Stomach (tissue), 19 donors: ENCODE measurements at regions of chr11 and their contacts with region 1.

Region 1: GRCh38 chr11:116276051-116277044 is 496.4 kb downstream of the BUD13 start:
- DNase-seq: peak; percentile 82 to 87
- H3K4me3 ChIP-seq: peak overlapping the region in 3 of 4 donors; percentile 22 to 29 (median 24)
- H3K27ac ChIP-seq: no peak overlapping the region
- H3K4me1 ChIP-seq: peaks cover 6 to 8% (median 7%) of the 10 kb centered on the region in 4 donors
- H3K27me3 ChIP-seq: peaks cover 0 to 35% (median 11%) of the 10 kb centered on the region in 3 donors
- CTCF ChIP-seq: peak in 5 of 7 experiments; percentile 80 to 98 (median 92)
- EP300 ChIP-seq: no peak
- POLR2A ChIP-seq: no peak

Region 2: DNA sequence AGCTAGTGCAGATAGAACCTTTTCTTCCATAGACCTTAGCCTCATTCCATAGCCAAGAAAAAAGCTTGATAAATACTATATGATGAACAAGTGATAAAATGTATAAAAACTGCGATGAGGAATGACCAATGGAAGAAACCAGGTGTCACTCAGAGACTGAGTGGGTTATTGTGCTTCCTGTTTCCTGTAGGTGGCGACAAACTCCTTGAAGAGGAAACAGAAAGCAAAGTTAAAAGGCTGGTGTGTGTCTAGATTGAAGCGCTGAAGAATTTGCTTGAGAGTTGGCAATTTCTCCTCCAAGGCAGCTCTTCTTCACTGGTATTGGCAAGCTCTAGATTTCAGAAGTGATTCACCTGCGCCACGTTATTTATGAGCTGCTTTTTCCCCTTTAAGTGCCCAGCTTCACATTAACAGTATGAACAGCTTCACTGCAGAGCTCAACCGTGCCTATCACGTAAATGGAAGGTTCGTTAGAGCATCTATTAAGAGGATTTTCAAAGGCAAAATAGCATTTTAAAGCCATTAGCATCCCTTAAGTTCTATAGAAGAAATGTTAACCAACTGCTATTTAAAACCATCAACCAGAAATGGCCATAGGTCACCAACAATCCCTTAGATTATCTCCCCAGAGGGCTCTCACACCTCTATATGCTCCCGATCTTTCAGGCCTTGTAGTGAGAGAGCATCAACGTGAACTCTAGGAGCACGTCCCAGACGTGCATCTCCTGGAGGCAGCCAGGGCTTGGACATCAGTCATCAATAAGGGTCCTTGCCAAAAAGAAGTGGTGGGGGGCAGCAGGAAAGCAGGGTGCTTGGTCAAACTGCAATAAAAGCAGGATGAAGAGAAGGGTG is 951.5 kb before region 1 on chr11:
- intact Hi-C with region 1: loop called (anchors 10 kb)
- DNase-seq: peak; percentile 27 to 84
- H3K4me3 ChIP-seq: no peak overlapping the region
- H3K27ac ChIP-seq: no peak overlapping the region
- H3K4me1 ChIP-seq: peaks cover 0 to 7% (median 0%) of the 10 kb centered on the region in 4 donors
- H3K27me3 ChIP-seq: no peaks in the 10 kb centered on the region
- CTCF ChIP-seq: peak in 5 of 7 experiments; percentile 59 to 81 (median 70)
- EP300 ChIP-seq: no peak
- POLR2A ChIP-seq: no peak